PC-3 (cell line): ENCODE measurements at regions of chr3 and their contacts with region 1.

Region 1: DNA sequence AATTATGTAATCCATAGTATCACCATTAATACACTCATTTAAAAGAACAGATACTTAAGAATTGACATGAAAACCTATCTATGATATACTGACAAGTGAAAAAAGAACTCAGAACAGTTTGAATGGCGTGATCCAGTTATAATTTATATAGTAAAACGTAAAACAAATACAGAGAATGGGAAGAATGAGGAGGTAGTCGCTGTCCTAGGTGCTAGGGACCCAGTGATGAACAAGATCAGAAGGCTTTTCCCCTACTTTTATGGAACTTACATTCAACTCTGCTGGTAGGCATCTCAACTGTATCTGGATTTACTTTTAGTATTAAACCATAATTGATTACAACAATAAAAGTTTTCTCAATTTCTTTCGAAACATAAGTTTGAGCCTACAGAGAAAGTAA is 31.8 kb downstream of the GSK3B start:
- DNase-seq: peak; percentile 16
- ATAC-seq: no peak
- H3K4me3 ChIP-seq: no peak overlapping the region
- H3K27ac ChIP-seq: no peak overlapping the region
- H3K4me1 ChIP-seq: no peaks in the 10 kb centered on the region
- H3K27me3 ChIP-seq: no peaks in the 10 kb centered on the region
- CTCF ChIP-seq: no peak

Region 2: DNA sequence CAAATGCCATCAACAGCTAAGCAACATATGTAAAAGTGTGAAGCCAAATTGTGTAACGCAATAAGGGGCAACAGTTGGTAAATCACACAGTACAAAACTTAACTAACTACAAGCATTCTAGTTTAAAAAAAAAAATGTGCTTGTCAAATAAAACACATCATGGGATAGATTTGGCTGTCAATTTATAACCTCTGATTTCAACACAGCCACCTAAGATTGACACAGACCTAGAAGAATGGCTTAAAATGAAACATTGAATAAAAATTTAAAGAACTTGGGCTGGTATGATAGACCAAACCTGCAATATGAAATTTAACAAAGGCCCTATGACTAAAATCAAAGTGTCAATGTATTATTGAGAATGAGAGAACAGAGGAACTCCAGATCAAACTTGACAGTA is 132.2 kb before region 1 on chr3:
- CTCF ChIA-PET with region 1: no interaction called
- POLR2A ChIA-PET with region 1: no interaction called
- intact Hi-C with region 1: loop called (anchors 5 kb)
- DNase-seq: no peak
- ATAC-seq: no peak
- H3K4me3 ChIP-seq: no peak overlapping the region
- H3K27ac ChIP-seq: no peak overlapping the region
- H3K4me1 ChIP-seq: no peaks in the 10 kb centered on the region
- H3K27me3 ChIP-seq: no peaks in the 10 kb centered on the region
- CTCF ChIP-seq: no peak